Natural killer cell (primary cell): ENCODE measurements at regions of chr16 and their contacts with region 1.

Region 1: DNA sequence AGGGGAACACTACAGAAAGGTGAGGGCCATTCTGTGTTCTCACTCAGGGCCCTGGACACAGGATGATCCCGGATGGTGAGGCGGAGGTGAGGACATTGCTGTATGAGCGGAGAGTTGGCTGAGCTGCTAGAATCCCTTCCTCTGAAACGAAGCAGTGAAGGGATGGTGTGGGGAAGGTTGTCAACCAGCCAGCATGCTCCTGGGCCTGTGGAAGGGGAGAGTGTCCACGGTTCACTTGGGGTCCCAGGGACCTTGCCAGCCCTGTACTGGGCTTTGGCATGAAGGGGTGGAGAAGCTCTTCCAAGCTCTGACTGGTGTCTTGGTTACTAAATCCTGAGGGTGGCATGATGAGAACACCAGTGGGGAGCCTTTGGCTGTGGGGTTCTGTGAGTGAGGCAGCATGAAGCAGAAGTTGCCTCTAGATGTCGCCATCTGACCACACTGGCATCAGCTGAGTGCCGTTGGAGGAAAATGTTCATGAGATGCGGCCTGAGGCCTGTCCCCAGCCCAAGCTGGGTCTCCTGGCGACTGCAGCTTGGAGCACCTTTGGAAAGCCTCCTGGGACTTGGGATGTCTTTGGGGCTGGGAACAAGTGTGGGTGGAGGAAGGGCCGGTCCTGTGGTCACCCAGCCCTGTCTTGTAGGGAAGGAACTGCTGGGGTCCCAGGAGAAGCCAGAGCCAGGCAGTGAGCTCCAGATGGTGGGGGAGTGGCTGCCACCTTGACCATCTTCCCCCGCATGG is 14.8 kb downstream of the PDP2 start:
- DNase-seq: peak; percentile 46 to 79
- ATAC-seq: peak; percentile 76 to 94 (median 92)
- H3K4me3 ChIP-seq: no peak overlapping the region
- H3K4me3 Mint-ChIP-seq: no peak overlapping the region
- H3K27ac ChIP-seq: no peak overlapping the region
- H3K27ac Mint-ChIP-seq: no peak overlapping the region
- H3K4me1 ChIP-seq: peaks cover 2% of the 10 kb centered on the region
- H3K4me1 Mint-ChIP-seq: peaks cover 4 to 27% of the 10 kb centered on the region in 2 donors
- H3K27me3 ChIP-seq: no peaks in the 10 kb centered on the region
- H3K27me3 Mint-ChIP-seq: no peaks in the 10 kb centered on the region
- CTCF ChIP-seq: peak; percentile 66

Region 2: DNA sequence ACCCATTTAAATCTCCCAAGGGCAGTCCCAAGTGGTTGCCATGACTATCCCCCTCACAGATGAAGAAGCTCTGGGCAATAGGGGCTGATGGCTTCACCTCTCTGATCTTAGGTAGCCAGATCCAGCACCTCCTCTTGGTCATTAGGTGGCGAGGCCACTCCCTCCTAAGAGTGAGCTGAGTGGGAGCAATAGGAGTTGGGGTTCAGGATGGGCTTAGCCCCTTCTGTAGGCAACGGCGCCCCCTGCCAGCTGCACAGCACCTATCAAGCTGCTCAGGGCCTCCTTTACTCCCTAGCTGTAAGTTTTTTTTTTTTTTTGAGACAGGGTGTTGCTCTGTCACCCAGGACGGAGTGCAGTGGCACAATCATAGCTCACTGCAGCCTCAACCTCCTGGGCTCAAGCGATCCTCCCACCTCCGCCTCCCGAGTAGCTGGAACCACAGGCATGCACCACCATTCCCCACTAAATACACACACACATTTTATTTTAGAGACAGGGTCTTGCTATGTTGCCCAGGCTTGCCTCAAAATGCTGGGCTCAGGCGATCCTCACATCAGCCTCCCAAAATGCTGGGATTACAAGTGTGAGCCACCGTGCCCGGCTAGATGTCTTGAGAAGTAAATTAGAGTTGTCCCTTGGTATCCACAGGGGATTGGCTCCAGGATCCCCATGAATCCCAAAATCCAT is 33.7 kb after region 1 on chr16:
- intact Hi-C with region 1: loop called (anchors 2 kb)
- DNase-seq: peak in 1 of 2 donors; percentile 50
- ATAC-seq: peak in 1 of 3 donors; percentile 19
- H3K4me3 ChIP-seq: no peak overlapping the region
- H3K4me3 Mint-ChIP-seq: no peak overlapping the region
- H3K27ac ChIP-seq: no peak overlapping the region
- H3K27ac Mint-ChIP-seq: peak overlapping the region in 1 of 2 donors; percentile 18
- H3K4me1 ChIP-seq: peaks cover 31% of the 10 kb centered on the region
- H3K4me1 Mint-ChIP-seq: peaks cover 23 to 32% of the 10 kb centered on the region in 2 donors
- H3K27me3 ChIP-seq: peaks cover 16% of the 10 kb centered on the region
- H3K27me3 Mint-ChIP-seq: peaks cover 3 to 12% of the 10 kb centered on the region in 2 donors
- CTCF ChIP-seq: peak; percentile 15

Region 3: DNA sequence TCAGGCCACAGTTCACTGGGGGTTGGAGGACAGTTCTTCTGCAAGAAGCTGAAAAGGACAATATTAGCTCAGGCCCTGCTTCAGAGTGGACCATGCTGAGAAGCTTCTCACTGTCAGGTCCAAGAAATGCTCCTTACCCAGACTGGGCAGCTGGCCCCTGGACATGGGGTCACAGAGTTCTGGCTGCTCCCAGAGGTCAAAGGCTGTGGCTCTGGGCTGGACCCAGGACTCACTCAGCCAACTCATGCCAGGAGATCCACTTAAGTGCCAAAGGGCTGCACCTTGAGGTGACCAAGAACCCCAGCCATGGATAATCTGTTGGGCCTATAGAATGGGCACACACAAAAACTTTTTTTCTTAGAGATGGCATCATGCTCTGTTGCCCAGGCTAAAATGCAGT is 44.2 kb after region 1 on chr16:
- intact Hi-C with region 1: no loop called
- DNase-seq: no peak
- ATAC-seq: no peak
- H3K4me3 ChIP-seq: no peak overlapping the region
- H3K4me3 Mint-ChIP-seq: no peak overlapping the region
- H3K27ac ChIP-seq: no peak overlapping the region
- H3K27ac Mint-ChIP-seq: no peak overlapping the region
- H3K4me1 ChIP-seq: peaks cover 17% of the 10 kb centered on the region
- H3K4me1 Mint-ChIP-seq: peaks cover 15 to 32% of the 10 kb centered on the region in 2 donors
- H3K27me3 ChIP-seq: no peaks in the 10 kb centered on the region
- H3K27me3 Mint-ChIP-seq: no peaks in the 10 kb centered on the region
- CTCF ChIP-seq: no peak

Region 4: GRCh38 chr16:66950971-66951790 is 56.1 kb after region 1 on chr16:
- intact Hi-C with region 1: loop called (anchors 1 kb)
- DNase-seq: no peak
- ATAC-seq: no peak
- H3K4me3 ChIP-seq: no peak overlapping the region
- H3K4me3 Mint-ChIP-seq: no peak overlapping the region
- H3K27ac ChIP-seq: no peak overlapping the region
- H3K27ac Mint-ChIP-seq: no peak overlapping the region
- H3K4me1 ChIP-seq: peaks cover 20% of the 10 kb centered on the region
- H3K4me1 Mint-ChIP-seq: peaks cover 23 to 28% of the 10 kb centered on the region in 2 donors
- H3K27me3 ChIP-seq: peaks cover 33% of the 10 kb centered on the region
- H3K27me3 Mint-ChIP-seq: peaks cover 32 to 38% of the 10 kb centered on the region in 2 donors
- CTCF ChIP-seq: no peak